Heart right ventricle (tissue), 16 donors: ENCODE measurements at regions of chr12 and their contacts with region 1.

Region 1: GRCh38 chr12:92505254-92506231 is 197.2 kb upstream of the PLEKHG7 start:
- DNase-seq: peak; percentile 65 to 80
- ATAC-seq: peak; percentile 63 to 87 (median 78)
- H3K4me3 ChIP-seq: peak overlapping the region in 6 of 10 donors; percentile 16 to 33 (median 30)
- H3K27ac ChIP-seq: peak overlapping the region; percentile 61 to 95 (median 80)
- H3K4me1 ChIP-seq: peaks cover 14 to 59% (median 40%) of the 10 kb centered on the region in 9 donors
- H3K27me3 ChIP-seq: no peaks in the 10 kb centered on the region
- CTCF ChIP-seq: no peak

Region 2: DNA sequence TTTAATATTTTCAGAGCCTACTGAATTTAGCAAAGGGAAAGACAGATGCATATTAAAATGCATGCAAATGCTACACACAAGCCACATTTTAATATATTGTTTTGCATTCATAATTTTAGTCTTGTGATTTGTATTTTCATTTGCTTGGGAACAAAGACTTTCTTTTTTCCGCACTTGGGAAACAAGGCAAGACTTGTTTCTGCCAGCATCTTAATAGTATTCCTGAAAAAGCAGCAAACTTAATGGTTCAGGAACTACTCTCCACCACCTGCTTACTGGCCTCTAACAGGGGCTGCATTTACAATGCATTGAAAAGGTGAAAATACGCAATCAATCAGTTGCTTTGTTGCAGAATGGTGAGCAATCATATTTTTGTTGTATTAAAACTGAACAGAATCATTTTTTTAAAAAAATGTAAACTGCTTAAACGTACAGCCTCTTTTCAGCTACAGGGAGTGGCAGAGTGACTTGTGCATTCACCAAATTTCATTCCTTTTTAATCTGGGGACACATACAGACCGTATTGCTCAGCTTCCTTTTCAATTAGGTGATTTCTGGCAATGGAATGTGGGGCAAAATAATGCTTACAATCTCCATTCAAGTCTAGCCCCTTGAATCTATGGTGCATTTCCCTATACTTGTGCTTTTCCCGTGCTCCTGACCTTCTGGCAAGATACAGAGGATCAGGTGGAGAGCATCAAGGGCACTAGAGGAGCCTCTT is 215.8 kb before region 1 on chr12:
- intact Hi-C with region 1: loop called in 1 of 10 experiments (anchors 10 kb)
- DNase-seq: no peak
- ATAC-seq: no peak
- H3K4me3 ChIP-seq: no peak overlapping the region
- H3K27ac ChIP-seq: peak overlapping the region in 1 of 10 donors; percentile 51
- H3K4me1 ChIP-seq: peaks cover 0 to 5% (median 0%) of the 10 kb centered on the region in 9 donors
- H3K27me3 ChIP-seq: no peaks in the 10 kb centered on the region
- CTCF ChIP-seq: no peak

Region 3: DNA sequence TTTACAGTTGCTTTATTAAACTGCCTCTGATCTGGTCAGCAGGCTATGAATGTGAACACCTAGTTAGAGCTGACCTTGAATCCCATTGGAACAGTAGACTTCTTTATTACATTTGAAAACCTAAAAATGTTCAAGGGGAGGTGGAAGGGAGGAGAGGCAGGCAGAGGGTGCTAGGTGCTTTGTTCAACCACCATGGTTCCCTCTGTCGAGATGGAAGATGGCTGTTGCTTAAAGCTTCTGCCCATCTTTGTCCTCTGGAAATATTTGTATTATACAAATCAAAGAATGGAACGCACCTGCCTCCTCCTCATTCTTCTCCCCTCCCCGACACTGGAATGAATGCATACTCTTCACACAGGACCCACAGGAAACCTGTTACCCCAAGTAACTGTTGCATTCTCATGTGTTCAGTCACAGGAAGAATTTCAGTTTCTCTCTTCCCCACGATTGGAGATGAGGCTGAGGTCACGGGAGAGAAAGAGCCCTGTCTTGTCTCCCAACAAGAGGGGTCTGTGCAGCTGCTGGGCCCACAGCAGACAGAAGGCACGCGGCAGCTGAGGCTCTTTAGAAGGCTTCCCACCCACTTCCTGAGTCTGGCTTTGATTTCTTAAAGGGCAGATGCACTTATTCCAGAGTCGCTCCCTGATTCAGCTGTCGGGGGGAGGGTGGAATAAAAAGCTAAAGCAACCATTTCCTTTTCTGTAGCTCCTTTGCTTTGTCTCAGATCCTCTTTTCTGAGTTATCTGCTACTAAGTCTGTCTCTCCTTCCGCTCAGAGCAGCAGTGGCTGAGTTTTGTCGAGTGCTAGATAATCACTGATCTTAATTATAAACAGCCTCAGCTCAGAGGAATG is 142.0 kb before region 1 on chr12:
- intact Hi-C with region 1: loop called in 1 of 10 experiments (anchors 5 kb)
- DNase-seq: peak; percentile 36 to 53
- ATAC-seq: peak; percentile 68 to 92 (median 86)
- H3K4me3 ChIP-seq: peak overlapping the region in 6 of 10 donors; percentile 2 to 41 (median 32)
- H3K27ac ChIP-seq: peak overlapping the region in 9 of 10 donors; percentile 5 to 87 (median 52)
- H3K4me1 ChIP-seq: peaks cover 0 to 29% (median 10%) of the 10 kb centered on the region in 9 donors
- H3K27me3 ChIP-seq: no peaks in the 10 kb centered on the region
- CTCF ChIP-seq: no peak

Region 4: GRCh38 chr12:92408072-92408900 is 97.3 kb before region 1 on chr12:
- intact Hi-C with region 1: no loop called
- DNase-seq: peak; percentile 11 to 23
- ATAC-seq: peak in 5 of 8 donors; percentile 26 to 93 (median 82)
- H3K4me3 ChIP-seq: no peak overlapping the region
- H3K27ac ChIP-seq: no peak overlapping the region
- H3K4me1 ChIP-seq: peaks cover 0 to 27% (median 18%) of the 10 kb centered on the region in 9 donors
- H3K27me3 ChIP-seq: no peaks in the 10 kb centered on the region
- CTCF ChIP-seq: peak in 6 of 9 donors; percentile 14 to 56 (median 34)

Region 5: GRCh38 chr12:92539976-92540781 is 34.6 kb after region 1 on chr12:
- intact Hi-C with region 1: loop called in 1 of 10 experiments (anchors 5 kb)
- DNase-seq: peak; percentile 26 to 42
- ATAC-seq: peak in 7 of 8 donors; percentile 43 to 65 (median 46)
- H3K4me3 ChIP-seq: no peak overlapping the region
- H3K27ac ChIP-seq: peak overlapping the region in 9 of 10 donors; percentile 44 to 81 (median 65)
- H3K4me1 ChIP-seq: peaks cover 10 to 69% (median 44%) of the 10 kb centered on the region in 9 donors
- H3K27me3 ChIP-seq: no peaks in the 10 kb centered on the region
- CTCF ChIP-seq: peak in 3 of 9 donors; percentile 14 to 24 (median 16)

Region 6: GRCh38 chr12:92551853-92552397 is 46.4 kb after region 1 on chr12:
- intact Hi-C with region 1: loop called in 1 of 10 experiments (anchors 5 kb)
- DNase-seq: no peak
- ATAC-seq: no peak
- H3K4me3 ChIP-seq: no peak overlapping the region
- H3K27ac ChIP-seq: peak overlapping the region in 6 of 10 donors; percentile 3 to 93 (median 78)
- H3K4me1 ChIP-seq: peaks cover 8 to 60% (median 32%) of the 10 kb centered on the region in 9 donors
- H3K27me3 ChIP-seq: no peaks in the 10 kb centered on the region
- CTCF ChIP-seq: no peak

Region 7: GRCh38 chr12:92561543-92561899 is 56.0 kb after region 1 on chr12:
- intact Hi-C with region 1: loop called in 5 of 10 experiments (anchors 5 kb)
- DNase-seq: peak in 1 of 2 donors; percentile 74
- ATAC-seq: peak; percentile 76 to 96 (median 89)
- H3K4me3 ChIP-seq: no peak overlapping the region
- H3K27ac ChIP-seq: peak overlapping the region in 9 of 10 donors; percentile 29 to 68 (median 45)
- H3K4me1 ChIP-seq: peaks cover 0 to 44% (median 24%) of the 10 kb centered on the region in 9 donors
- H3K27me3 ChIP-seq: no peaks in the 10 kb centered on the region
- CTCF ChIP-seq: no peak

Region 8: DNA sequence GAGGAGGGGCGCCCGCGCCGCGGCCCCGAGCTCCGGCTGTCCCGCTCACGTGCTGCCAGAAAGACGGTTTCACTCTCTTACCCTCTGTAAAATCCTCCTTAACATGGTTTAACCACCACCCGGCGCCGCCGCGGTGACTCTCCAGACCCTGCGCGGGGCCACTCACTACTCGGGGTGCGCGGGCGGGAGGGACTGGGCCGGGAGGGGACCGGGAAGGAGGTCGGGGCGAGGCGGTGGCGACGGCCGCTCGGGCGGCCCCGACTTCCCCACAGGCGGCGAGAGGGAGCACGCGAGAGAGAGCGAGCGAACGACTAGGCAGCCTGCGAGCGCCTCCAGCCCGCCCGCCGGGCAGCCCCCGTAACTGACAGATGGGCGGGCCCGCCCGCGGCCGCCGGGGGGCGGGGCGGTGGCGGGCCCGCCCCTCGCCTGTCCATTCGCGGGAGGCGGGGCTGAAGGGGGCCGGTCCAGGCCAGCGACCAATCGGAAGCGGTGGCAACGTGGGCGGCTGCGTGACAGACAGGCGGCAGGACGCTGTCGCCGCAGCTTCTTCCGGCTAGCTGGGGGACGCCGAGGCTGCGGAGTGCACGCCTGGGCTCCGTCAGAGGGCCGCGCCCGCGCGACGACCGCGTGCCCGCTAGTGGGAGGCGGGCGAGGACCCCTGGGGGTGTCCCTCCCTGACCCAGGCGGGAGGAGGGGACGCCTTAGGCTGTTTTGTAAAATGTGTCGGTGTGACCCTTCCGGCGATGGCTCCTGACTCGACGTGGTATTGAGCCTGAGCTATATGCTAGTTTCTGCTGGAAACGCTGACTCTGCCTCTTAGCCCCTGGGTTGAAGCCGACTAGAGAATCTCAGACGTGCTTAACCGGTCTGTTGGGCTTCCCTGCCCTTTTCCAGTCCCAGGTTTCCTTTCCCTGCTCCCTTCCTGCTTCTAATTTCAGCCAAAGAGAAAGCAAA is 423.7 kb after region 1 on chr12 and contains the start of gene EEA1:
- intact Hi-C with region 1: loop called in 1 of 10 experiments (anchors 10 kb)
- DNase-seq: peak; percentile 97 to 98
- ATAC-seq: peak; percentile 95 to 98 (median 95)
- H3K4me3 ChIP-seq: peak within 1 kb of the TSS; percentile 66 to 94 (median 87)
- H3K27ac ChIP-seq: peak within 1 kb of the TSS; percentile 92 to 99 (median 97)
- H3K4me1 ChIP-seq: peaks cover 0 to 51% (median 43%) of the 10 kb centered on the region in 9 donors
- H3K27me3 ChIP-seq: no peaks in the 10 kb centered on the region
- CTCF ChIP-seq: peak in 5 of 9 donors; percentile 7 to 56 (median 41)
- total RNA-seq, gene EEA1: 21.7 to 41.6 (median 33.8) TPM